Posterior cingulate gyrus (tissue), 11 donors: ENCODE measurements at regions of chr15 and their contacts with region 1.

Region 1: DNA sequence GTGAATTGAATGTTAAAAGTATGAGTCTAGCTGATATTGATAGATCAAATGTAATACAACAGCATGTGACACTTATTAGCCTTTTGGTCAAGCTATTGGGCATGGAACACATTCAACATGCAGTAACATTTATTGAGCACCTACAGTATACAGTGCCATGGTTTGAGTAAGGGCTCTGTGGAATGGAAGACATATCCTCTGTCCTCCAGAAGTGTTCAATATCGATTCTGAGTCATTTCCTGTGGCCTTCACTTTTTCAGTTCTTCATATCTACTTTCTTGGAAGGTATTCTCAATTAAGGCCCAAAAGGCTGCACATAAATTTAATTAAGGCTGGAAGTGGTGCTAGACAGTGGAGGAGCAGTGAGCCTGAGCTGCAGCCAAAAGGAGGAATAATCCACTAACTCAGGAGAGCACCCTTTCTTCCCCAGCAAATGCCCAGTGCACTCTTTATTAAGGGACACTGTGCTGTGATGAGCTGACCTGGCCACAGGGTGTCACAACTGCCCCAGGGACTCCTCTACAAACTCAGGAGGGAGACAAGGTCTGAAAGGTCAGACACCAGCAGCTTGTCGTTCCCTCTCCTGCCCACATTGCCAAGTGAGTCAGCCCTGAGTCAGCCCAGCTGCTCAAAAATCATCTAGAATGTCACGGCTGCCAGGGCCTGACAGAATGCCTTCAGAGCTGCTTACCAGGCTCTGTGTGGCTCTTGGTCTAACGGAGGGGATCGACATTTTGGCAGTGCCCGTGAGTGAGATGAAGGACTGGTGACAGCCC is 544.8 kb downstream of the AGBL1 start:
- DNase-seq: peak in 9 of 10 donors; percentile 10 to 92 (median 51)

Region 2: DNA sequence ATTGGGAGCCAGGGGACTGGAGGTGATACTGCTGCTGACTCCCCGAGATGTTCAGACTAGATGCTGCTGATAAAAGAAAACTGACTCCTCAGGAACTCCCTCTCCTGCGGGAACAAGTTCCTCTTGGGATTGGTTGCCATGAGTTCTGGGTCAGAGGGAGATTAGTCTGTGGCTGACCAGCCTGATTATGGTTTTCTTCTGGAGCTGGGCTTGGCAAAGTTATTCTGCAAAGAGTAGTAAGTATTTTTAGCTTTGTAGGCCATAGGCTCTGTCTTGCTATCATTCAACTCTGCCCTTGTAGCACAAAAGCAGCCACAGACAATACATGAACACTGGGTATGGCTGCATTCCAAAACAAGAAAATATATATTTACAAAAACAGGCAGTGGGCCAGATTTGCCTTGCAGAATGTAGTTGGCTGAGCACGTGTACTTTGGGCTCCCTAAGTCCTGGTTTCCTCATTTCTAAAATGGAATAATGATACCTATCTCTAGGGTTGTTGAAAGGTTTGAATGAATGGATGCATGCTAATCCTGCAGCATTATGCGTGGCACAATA is 252.0 kb after region 1 on chr15:
- intact Hi-C with region 1: no loop called
- DNase-seq: no peak

Region 3: DNA sequence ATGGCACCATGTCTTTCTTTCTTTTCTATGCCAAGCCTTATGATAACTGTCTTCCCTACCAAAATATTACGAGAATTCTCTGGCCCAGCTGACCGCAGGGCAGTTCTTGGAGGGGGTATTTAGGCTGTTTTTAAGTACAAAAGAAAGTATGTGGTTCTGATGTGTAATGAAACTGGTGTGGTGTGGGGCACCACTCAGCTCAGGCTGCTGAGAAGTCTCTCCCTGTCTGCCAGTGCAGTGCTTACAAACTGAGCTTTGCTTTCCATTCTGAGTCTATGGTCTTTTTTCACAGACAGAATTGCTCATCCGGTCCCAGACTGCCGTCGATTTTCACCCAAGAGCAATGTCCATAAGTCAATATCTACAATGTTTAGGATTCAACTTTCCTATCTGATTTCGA is 784.5 kb after region 1 on chr15:
- intact Hi-C with region 1: no loop called
- DNase-seq: no peak

Region 4: DNA sequence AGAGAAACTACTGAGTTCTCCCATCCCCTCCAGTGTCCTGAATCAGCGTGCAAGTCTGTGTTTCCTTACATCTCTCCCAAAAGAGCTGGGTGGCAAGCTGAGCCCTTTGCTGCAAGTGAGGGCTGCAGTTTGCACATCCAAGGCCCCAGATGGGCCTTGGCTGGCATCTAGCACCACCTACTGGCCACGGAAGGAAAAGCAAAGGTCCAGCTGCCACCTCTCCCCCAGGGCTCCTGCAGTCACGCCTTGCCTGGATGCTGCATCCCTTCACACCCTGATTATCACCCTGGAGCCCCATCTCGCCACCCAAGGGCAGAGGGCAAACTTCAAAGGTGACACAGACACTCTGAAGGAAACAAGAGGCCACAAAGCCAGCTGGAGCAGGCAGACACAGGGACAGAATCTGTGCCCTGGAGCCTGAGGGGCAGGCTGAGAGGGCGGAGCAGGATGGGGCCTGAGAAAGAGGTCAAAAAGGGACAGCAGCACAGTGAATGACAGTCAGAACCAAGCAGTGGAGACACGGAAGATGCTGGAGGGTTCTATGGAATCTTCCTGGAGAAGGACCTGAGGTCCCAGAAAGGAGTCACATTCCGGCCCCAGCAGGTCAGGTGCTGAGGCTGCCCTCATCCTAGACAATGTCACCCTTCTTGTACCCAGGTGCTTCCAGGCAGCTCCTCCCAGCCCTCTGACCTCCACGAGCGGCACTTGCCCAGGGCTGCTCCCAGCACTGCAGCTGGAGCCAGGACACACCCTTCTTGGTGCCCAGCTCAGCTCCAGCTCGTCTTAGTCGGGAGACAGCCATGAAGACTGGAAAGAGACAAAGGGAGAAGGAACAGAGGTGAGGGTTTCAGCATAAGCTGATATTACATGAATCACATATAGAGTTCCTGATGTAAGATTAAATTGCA is 1650.4 kb after region 1 on chr15:
- intact Hi-C with region 1: loop called (anchors 10 kb)
- DNase-seq: peak; percentile 61 to 97 (median 78)